ENCODE measurements at regions of chrX and their contacts with region 1.

Region 1: GRCh38 chrX:68428431-68428830 is 4.9 kb downstream of the OPHN1 start:
- DNase-seq: no peak
- H3K4me3 ChIP-seq: no peak overlapping the region
- H3K27ac ChIP-seq: no peak overlapping the region
- H3K4me1 ChIP-seq: no peaks in the 10 kb centered on the region
- H3K27me3 ChIP-seq: peaks cover 0 to 3% of the 10 kb centered on the region in 2 donors
- CTCF ChIP-seq: no peak
- POLR2A ChIP-seq: no peak

Region 2: DNA sequence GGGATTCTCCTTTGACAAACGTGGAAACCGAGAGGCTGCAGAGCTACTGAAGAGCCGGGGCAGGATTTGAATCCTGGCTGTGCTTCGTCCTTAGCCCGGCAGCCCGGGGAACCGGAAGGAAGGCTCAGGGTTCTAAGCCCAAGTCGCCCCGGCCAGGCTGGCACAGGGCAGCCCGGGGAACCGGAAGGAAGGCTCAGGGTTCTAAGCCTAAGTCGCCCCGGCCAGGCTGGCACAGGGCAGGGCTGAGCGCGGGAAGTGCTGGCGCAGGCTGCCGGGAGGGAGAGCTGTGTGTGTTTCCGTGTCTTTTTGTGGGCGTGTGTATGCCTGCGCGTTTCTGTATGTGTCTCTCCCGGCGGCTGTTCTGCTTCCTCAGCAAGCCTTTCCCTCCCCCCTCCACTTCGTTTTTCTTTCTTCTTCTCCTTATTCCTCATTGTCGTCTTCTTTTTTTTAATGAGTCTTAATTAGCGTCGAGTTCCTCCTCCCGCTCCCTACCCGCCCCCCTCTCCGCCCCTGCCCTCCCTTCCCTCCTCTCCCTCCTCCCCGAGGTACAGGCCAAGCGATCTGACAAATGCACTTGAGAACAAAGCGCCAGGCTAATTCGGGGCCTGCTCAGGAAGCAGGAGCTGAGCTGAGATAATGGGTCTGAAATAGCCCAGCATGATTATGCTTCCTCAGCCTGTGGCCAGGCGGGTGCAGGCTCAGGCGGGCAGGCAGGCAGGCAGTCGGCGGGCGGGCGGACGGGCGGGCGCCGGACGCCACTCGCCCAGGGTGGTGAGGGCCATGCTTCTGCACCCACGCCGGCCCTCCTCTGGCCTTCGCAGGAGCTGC is 466.3 kb after region 1 on chrX:
- intact Hi-C with region 1: loop called (anchors 5 kb)
- DNase-seq: peak; percentile 35 to 53
- H3K4me3 ChIP-seq: peak overlapping the region; percentile 14 to 48 (median 23)
- H3K27ac ChIP-seq: peak overlapping the region; percentile 77 to 87
- H3K4me1 ChIP-seq: no peaks in the 10 kb centered on the region
- H3K27me3 ChIP-seq: peaks cover 0 to 62% of the 10 kb centered on the region in 2 donors
- CTCF ChIP-seq: no peak
- POLR2A ChIP-seq: no peak

Measured in breast epithelium (tissue), 4 donors.